Common myeloid progenitor, CD34-positive (primary cell): ENCODE measurements at regions of chr10 and their contacts with region 1.

Region 1: GRCh38 chr10:77004917-77005564 is 632.6 kb downstream of the KCNMA1 start:
- DNase-seq: peak; percentile 8 to 44 (median 24)
- H3K4me3 ChIP-seq: no peak overlapping the region
- H3K27ac ChIP-seq: no peak overlapping the region
- H3K4me1 ChIP-seq: peaks cover 0 to 6% (median 4%) of the 10 kb centered on the region in 4 experiments
- H3K27me3 ChIP-seq: no peaks in the 10 kb centered on the region

Region 2: DNA sequence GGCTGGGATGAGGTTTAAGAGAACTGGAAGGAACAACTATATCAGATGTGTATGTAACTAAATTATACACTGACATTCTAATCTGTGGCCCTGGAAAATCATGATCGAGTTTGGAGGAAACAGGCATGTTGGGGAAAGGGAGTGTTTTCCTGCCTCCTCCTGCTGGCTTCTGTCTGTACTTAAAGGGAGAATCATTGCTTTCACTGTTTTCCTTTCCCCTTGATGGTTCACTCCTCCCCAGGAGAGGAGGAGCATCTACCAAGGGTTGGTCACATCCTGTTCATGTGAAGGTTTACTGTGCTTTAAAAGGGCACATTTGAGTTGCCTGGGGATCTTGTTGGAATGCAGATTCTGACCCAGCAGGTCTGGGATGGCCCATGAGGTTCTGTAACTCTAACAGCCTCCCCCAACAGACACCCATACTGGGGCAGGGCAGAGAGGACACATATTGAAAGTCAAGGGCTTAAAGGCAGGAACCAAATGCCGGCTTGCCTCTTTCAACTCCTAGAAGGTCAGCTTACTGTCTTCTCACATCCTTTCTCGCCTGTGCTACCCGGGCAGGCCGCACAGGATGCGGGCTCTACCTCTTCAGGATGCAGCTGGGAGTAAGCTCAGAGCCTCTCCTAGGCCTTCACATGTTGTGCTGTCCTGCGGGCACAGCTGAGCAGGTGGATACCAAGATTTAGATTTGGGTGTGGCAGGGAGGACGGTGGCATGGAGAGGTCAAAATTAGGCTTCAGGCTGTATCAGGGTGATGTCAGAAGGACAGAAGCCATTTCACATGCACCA is 62.2 kb before region 1 on chr10:
- CTCF ChIA-PET with region 1: no interaction called
- POLR2A ChIA-PET with region 1: no interaction called
- DNase-seq: peak in 1 of 3 donors; percentile 21
- H3K4me3 ChIP-seq: no peak overlapping the region
- H3K27ac ChIP-seq: no peak overlapping the region
- H3K4me1 ChIP-seq: no peaks in the 10 kb centered on the region
- H3K27me3 ChIP-seq: no peaks in the 10 kb centered on the region

Region 3: GRCh38 chr10:77016278-77016815 is 11.3 kb after region 1 on chr10:
- CTCF ChIA-PET with region 1: interaction called, 10 read pairs
- POLR2A ChIA-PET with region 1: no interaction called
- DNase-seq: no peak
- H3K4me3 ChIP-seq: no peak overlapping the region
- H3K27ac ChIP-seq: no peak overlapping the region
- H3K4me1 ChIP-seq: no peaks in the 10 kb centered on the region
- H3K27me3 ChIP-seq: no peaks in the 10 kb centered on the region

Region 4: DNA sequence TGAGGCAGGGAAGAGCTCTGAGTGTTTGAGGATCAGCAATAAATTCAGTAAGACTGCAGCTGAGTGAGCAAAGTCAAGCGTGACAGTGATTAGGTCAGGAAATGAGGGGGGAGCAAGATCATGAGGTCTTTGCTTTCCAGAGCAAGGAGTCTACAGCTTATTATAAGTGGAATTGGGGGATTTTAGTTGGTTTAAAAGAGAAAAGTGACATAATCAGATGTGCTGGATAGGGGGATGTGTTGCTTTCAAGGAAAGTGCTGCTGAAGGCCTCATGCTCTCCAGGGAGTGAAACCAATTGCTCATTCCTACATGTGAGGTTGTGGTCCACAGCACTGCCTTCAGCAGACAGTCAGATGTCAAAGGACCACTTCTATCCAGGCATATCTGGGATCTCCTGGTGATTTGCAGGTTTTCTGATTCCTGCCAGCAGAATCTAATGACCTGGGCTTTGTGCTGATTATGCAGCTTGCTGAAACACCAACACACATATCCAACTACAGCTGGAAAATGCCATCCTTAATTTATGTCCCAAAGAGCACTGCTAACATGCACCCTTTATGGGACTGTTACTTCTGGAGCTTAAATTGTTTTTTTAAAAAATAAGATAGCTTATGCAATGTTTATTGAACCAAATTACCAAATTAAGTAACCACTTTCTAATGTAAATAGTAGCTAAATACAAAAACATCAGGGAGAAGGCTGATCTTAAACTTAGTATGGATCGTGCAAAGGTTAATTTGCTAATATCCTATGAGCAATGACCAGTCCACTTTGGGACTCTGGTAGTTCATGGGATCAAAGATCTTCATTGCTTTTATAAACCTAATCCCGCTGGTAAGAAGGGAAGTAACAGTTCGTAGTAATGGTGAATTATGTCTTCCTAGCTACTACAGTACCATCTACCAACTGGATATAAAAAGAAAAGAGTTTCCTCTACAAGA is 25.0 kb after region 1 on chr10:
- CTCF ChIA-PET with region 1: interaction called, 11 read pairs
- POLR2A ChIA-PET with region 1: no interaction called
- DNase-seq: peak in 2 of 3 donors; percentile 11 to 15
- H3K4me3 ChIP-seq: no peak overlapping the region
- H3K27ac ChIP-seq: no peak overlapping the region
- H3K4me1 ChIP-seq: peaks cover 21 to 52% (median 35%) of the 10 kb centered on the region in 4 experiments
- H3K27me3 ChIP-seq: no peaks in the 10 kb centered on the region